ENCODE measurements at regions of chr6 and their contacts with region 1.

Region 1: DNA sequence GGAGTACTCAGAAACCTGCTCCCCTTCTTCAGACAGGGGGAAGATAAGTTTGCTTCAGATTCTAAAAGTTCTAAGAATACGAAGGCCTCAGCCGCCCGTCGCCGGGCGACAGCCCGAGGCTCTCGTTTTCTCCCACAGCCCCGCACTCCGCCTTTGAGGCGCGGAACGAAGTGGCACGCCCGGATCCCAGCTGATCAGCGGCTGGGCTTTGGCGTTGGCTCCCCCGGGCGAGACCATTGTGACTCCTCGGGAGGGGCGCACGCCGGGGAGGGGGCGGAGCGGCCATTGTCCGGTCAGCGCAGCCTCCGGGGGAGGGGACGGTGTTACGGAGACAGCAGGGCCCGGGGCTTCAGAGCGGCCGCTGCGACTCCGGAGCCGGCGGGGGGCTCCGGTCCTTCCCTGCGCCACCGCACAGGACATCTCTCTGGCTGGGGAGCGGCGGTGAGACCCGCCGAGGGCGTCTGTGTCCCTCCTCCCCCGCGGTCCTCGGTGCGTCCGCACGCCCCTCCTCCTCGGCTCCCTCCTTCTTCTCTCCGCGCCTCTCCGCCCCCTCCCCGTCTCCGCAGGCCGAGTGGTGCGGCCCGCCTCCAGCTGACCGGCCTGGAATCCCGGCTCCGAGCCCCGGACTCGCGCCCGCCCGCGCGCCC is at the start of gene ZFAND3:
- DNase-seq: peak; percentile 96
- H3K4me3 Mint-ChIP-seq: peak within 1 kb of the TSS; percentile 91
- H3K27ac Mint-ChIP-seq: peak within 1 kb of the TSS; percentile 98
- H3K4me1 Mint-ChIP-seq: peaks cover 31% of the 10 kb centered on the region
- H3K27me3 Mint-ChIP-seq: no peaks in the 10 kb centered on the region
- CTCF ChIP-seq: no peak
- total RNA-seq, gene ZFAND3: 85.0 and 100 TPM in 2 replicates

Region 2: GRCh38 chr6:37791156-37791919 is 28.0 kb before region 1 on chr6:
- CTCF ChIA-PET with region 1: interaction called, 4 read pairs
- POLR2A ChIA-PET with region 1: interaction called, 18 read pairs
- intact Hi-C with region 1: no loop called
- DNase-seq: peak; percentile 97
- H3K4me3 Mint-ChIP-seq: no peak overlapping the region
- H3K27ac Mint-ChIP-seq: no peak overlapping the region
- H3K4me1 Mint-ChIP-seq: peaks cover 28% of the 10 kb centered on the region
- H3K27me3 Mint-ChIP-seq: no peaks in the 10 kb centered on the region
- CTCF ChIP-seq: peak; percentile 94

Region 3: GRCh38 chr6:37809197-37809543 is 10.1 kb before region 1 on chr6:
- CTCF ChIA-PET with region 1: interaction called, 3 read pairs
- POLR2A ChIA-PET with region 1: interaction called, 25 read pairs
- intact Hi-C with region 1: no loop called
- DNase-seq: no peak
- H3K4me3 Mint-ChIP-seq: no peak overlapping the region
- H3K27ac Mint-ChIP-seq: no peak overlapping the region
- H3K4me1 Mint-ChIP-seq: no peaks in the 10 kb centered on the region
- H3K27me3 Mint-ChIP-seq: peaks cover 29% of the 10 kb centered on the region
- CTCF ChIP-seq: no peak

Region 4: GRCh38 chr6:37860226-37860839 is 41.0 kb after region 1 on chr6:
- CTCF ChIA-PET with region 1: interaction called, 3 read pairs
- POLR2A ChIA-PET with region 1: interaction called, 39 read pairs
- intact Hi-C with region 1: loop called (anchors 5 kb)
- DNase-seq: peak; percentile 64
- H3K4me3 Mint-ChIP-seq: no peak overlapping the region
- H3K27ac Mint-ChIP-seq: no peak overlapping the region
- H3K4me1 Mint-ChIP-seq: peaks cover 25% of the 10 kb centered on the region
- H3K27me3 Mint-ChIP-seq: no peaks in the 10 kb centered on the region
- CTCF ChIP-seq: peak; percentile 40

Region 5: DNA sequence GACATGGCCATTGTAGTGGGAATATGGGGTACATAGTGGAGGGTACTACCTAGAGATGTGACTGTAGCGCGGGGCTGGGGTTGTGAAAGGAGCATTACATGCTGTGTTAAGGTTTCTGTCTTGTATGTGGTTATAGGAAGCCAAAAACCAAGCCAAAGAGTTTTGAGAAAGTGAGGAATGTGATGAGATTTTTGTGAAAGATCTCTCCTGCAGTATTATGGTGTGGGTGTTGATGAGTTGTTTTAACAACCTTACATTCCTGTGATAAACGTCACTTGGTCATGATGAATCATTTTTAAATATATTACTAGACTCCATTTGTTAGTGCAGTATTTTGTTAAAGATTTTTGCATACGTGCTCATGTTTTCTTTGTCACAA is 49.1 kb after region 1 on chr6:
- CTCF ChIA-PET with region 1: no interaction called
- POLR2A ChIA-PET with region 1: interaction called, 39 read pairs
- intact Hi-C with region 1: loop called (anchors 5 kb)
- DNase-seq: peak; percentile 49
- H3K4me3 Mint-ChIP-seq: peak overlapping the region; percentile 31
- H3K27ac Mint-ChIP-seq: peak overlapping the region; percentile 91
- H3K4me1 Mint-ChIP-seq: peaks cover 48% of the 10 kb centered on the region
- H3K27me3 Mint-ChIP-seq: no peaks in the 10 kb centered on the region
- CTCF ChIP-seq: no peak

Region 6: DNA sequence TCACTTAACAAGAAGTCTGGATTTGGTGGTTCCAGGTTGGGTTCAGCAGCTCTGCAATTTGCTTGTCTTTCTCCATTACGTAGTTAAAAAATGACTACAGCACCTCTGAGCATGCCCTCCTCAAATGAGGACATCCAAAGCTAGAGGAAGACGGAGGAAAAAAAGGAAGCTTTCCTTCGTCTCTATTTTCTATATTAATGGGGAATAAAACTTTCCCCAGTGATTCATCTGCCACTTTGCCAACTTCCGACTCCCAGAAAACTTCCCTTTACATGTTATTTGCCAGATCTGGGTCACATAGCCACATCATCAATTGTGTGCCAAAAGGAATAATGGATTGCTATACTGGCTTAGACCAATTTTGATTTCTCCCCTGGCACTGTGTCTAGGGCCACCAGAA is 69.8 kb after region 1 on chr6:
- CTCF ChIA-PET with region 1: no interaction called
- POLR2A ChIA-PET with region 1: interaction called, 33 read pairs
- intact Hi-C with region 1: no loop called
- DNase-seq: peak; percentile 43
- H3K4me3 Mint-ChIP-seq: peak overlapping the region; percentile 37
- H3K27ac Mint-ChIP-seq: peak overlapping the region; percentile 53
- H3K4me1 Mint-ChIP-seq: peaks cover 15% of the 10 kb centered on the region
- H3K27me3 Mint-ChIP-seq: no peaks in the 10 kb centered on the region
- CTCF ChIP-seq: no peak

Measured in MCF 10A (cell line).